ENCODE measurements at regions of chr1 and their contacts with region 1.

Region 1: GRCh38 chr1:227762233-227762911 is 27.1 kb downstream of the SNAP47 start:
- DNase-seq: peak; percentile 65
- H3K4me3 ChIP-seq: no peak overlapping the region
- H3K27ac ChIP-seq: no peak overlapping the region
- H3K4me1 ChIP-seq: peaks cover 2% of the 10 kb centered on the region
- H3K27me3 ChIP-seq: no peaks in the 10 kb centered on the region
- CTCF ChIP-seq: peak in 3 of 4 experiments; percentile 86 to 92 (median 91)
- POLR2A ChIP-seq: no peak

Region 2: GRCh38 chr1:227482023-227482299 is 280.4 kb before region 1 on chr1:
- intact Hi-C with region 1: loop called (anchors 5 kb)
- DNase-seq: no peak
- H3K4me3 ChIP-seq: no peak overlapping the region
- H3K27ac ChIP-seq: no peak overlapping the region
- H3K4me1 ChIP-seq: no peaks in the 10 kb centered on the region
- H3K27me3 ChIP-seq: no peaks in the 10 kb centered on the region
- CTCF ChIP-seq: no peak
- POLR2A ChIP-seq: no peak

Region 3: GRCh38 chr1:227632325-227632724 is 130.0 kb before region 1 on chr1:
- intact Hi-C with region 1: no loop called
- DNase-seq: no peak
- H3K4me3 ChIP-seq: no peak overlapping the region
- H3K27ac ChIP-seq: no peak overlapping the region
- H3K4me1 ChIP-seq: no peaks in the 10 kb centered on the region
- H3K27me3 ChIP-seq: no peaks in the 10 kb centered on the region
- CTCF ChIP-seq: no peak
- POLR2A ChIP-seq: no peak

Region 4: DNA sequence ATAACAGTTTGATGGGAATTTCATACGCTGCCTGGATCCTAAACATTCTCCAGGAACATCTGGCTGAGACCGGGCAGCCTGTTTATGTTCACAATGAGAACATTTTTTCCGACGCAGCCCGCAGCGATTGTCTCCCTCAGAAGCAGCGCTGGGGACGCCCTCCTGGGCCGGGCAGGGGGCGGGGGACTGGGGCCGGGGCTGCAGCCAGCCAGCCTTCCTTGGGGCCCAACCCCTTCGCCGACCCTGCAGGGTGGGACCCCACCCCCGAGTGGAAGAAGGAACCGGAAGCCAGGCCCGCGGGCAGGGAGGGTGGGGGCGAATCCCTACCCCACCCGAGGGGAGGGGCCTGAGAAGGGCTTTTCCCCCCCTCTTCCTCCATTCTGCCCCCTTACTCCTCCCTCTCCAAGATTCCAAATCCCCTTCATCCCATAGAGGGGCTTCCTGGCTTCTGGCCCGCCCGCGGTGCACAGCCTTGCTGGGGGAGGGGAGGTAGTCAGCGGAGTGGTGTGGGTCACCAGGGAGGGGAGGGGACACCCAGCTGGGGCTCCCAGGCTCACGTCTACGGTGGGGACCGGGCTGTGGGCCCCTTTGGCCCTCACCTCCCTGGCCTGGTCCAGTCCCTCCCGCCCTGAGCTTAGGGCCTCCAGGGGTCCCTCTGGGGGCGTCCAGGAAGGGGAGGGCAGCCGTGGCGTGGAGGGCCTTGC is 124.8 kb after region 1 on chr1:
- intact Hi-C with region 1: loop called (anchors 10 kb)
- DNase-seq: peak; percentile 10
- H3K4me3 ChIP-seq: peak overlapping the region; percentile 31 to 47
- H3K27ac ChIP-seq: peak overlapping the region; percentile 78 to 85
- H3K4me1 ChIP-seq: peaks cover 8% of the 10 kb centered on the region
- H3K27me3 ChIP-seq: no peaks in the 10 kb centered on the region
- CTCF ChIP-seq: no peak
- POLR2A ChIP-seq: no peak

Region 5: DNA sequence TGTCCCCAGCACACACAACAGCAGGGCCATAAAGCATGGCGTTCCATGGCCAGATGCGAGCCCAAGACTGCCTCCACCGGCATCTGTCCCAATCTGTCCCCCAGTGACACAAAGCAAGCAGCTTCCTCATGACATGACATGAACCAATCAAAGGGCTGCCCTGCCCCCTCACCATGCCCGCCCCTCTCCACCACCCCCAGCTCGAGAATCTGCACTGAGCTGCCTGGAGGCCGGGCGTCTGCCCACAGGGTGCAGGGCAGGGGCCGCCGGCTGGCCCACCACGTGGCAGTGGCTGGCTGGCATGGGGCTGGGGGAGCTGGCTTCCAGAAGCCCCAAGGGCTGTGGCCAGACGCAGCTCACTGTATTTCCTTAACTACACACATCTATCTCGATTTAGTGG is 157.5 kb after region 1 on chr1:
- intact Hi-C with region 1: no loop called
- DNase-seq: no peak
- H3K4me3 ChIP-seq: no peak overlapping the region
- H3K27ac ChIP-seq: no peak overlapping the region
- H3K4me1 ChIP-seq: no peaks in the 10 kb centered on the region
- H3K27me3 ChIP-seq: no peaks in the 10 kb centered on the region
- CTCF ChIP-seq: no peak
- POLR2A ChIP-seq: no peak

Region 6: GRCh38 chr1:227946624-227947385 is 184.4 kb after region 1 on chr1:
- intact Hi-C with region 1: loop called (anchors 1 kb)
- DNase-seq: peak; percentile 74
- H3K4me3 ChIP-seq: peak overlapping the region; percentile 43 to 51
- H3K27ac ChIP-seq: peak overlapping the region; percentile 62 to 70
- H3K4me1 ChIP-seq: peaks cover 13% of the 10 kb centered on the region
- H3K27me3 ChIP-seq: no peaks in the 10 kb centered on the region
- CTCF ChIP-seq: peak; percentile 51 to 94 (median 85)
- POLR2A ChIP-seq: no peak

Region 7: DNA sequence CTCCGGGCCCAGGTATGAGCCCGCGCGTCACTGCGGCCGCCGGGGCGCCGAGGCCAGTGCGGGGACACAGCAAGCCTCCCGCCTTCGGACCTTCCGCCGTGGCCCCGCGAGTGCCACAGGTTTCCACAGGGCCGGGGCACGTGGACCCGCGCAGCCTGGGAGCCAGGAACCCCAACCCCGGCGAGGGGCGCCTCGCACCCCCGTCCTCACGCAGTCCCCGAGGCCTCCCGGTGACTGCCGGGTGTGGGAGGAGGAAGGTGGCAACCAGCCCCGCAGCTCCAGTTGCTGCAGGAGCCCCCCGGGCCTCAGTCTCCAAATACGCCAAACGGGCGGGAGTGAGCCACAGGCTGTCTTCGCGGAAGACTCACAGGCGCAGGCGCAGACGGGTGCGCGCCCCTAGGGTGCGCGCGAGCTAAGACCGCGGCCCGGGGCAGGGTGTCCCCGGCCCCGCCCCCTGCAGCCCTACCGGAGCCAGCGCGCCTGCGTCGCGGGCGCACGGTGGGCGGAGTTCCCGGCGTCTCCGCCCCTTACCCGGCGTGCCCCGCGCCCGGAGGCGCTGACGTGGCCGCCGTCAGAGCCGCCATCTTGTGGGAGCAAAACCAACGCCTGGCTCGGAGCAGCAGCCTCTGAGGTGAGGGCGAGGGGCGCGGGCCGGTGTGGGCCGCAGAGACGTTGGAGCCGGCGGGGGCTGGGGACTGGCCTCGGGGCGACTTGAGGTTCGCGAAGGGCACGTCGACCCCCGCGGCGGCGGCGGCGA is 319.9 kb after region 1 on chr1 and contains the start of gene ARF1:
- intact Hi-C with region 1: loop called (anchors 10 kb)
- DNase-seq: peak; percentile 92
- H3K4me3 ChIP-seq: peak within 1 kb of the TSS; percentile 95 to 100
- H3K27ac ChIP-seq: peak within 1 kb of the TSS; percentile 98 to 100
- H3K4me1 ChIP-seq: peaks cover 31% of the 10 kb centered on the region
- H3K27me3 ChIP-seq: no peaks in the 10 kb centered on the region
- CTCF ChIP-seq: peak in 3 of 4 experiments; percentile 30 to 66 (median 57)
- POLR2A ChIP-seq: peak; percentile 91
- total RNA-seq, gene ARF1: 478 to 512 TPM

Region 8: DNA sequence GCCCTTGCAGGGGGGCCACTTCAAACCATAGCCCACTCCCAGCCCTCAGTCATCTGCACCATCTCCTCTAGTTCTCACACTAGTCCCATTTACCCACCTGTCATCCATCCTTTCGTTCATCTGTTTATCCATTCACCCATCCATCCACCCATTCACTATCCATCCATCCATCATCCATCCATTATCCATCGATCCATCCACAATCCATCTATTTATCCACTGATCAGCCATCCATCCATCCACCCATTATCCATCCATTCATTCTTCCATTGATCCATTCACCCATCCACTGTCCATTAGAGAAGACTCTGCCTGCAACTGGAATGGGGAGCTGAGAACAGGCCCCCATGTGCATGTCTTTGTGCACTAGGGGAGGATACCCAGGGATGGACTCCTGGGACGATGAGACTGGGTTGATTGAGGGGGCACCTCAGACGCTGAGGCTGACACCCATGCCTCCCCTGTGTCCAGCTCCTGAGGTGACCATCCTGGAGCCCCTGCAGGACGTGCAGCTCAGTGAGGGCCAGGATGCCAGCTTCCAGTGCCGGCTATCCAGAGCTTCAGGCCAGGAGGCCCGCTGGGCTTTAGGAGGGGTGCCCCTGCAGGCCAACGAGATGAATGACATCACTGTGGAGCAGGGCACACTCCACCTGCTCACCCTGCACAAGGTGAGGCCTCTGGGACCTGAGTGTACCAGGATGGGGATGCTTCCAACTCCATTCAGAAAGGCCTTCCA is 546.4 kb after region 1 on chr1:
- intact Hi-C with region 1: no loop called
- DNase-seq: no peak
- H3K4me3 ChIP-seq: no peak overlapping the region
- H3K27ac ChIP-seq: no peak overlapping the region
- H3K4me1 ChIP-seq: no peaks in the 10 kb centered on the region
- H3K27me3 ChIP-seq: no peaks in the 10 kb centered on the region
- CTCF ChIP-seq: no peak
- POLR2A ChIP-seq: no peak